Left cardiac atrium (tissue), 4 donors: ENCODE measurements at regions of chr9 and their contacts with region 1.

Region 1: GRCh38 chr9:133144137-133144903 is 19.4 kb downstream of the GBGT1 start:
- DNase-seq: peak; percentile 73
- ATAC-seq: peak; percentile 41 to 48

Region 2: GRCh38 chr9:133103183-133103986 is 40.9 kb before region 1 on chr9:
- intact Hi-C with region 1: loop called (anchors 1 to 2 kb)
- DNase-seq: peak; percentile 73
- ATAC-seq: peak; percentile 73 to 82